ENCODE measurements at regions of chr3 and their contacts with region 1.

Region 1: DNA sequence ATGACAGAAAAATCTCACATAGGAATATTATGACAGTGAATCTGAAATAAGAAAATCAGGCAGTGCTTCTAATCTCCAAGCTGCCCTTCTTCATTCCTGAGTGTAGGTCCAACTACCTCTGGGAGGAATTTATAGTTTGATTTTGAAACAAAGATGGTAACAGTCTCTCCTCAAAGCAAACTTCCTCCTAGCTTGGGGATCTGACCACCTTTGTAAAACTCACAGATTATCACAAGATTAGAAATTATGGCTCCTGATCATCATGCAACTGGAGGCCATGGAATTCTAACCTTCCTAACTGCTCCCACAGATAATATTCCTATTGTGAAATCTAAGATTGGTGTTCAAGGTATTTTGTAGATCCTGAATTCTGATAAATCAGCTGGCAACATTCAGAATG is 7.4 kb downstream of the OR5H14 start:
- DNase-seq: no peak
- H3K4me3 ChIP-seq: no peak overlapping the region
- H3K27ac ChIP-seq: no peak overlapping the region
- H3K4me1 ChIP-seq: no peaks in the 10 kb centered on the region
- H3K27me3 ChIP-seq: no peaks in the 10 kb centered on the region
- CTCF ChIP-seq: no peak

Region 2: DNA sequence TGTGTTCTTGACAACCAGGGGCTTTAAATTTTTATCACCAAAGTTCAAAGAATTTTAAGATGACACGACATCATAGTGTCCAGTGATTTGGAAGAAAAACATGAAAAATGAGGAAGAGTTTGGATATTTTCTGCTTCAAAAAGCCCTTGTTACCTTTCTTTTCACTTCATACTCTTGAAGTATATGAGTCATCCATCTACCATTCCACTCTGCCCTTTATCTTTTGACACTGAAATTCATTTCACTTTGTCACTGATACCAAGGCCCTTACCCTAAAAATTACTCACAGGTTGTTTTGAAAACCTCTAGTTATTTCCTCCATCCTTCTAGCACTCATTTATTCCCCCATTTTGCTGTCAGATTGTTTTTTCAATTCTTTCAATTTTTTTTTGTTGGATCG is 54.6 kb after region 1 on chr3:
- intact Hi-C with region 1: loop called (anchors 2 kb)
- DNase-seq: no peak
- H3K4me3 ChIP-seq: no peak overlapping the region
- H3K27ac ChIP-seq: no peak overlapping the region
- H3K4me1 ChIP-seq: no peaks in the 10 kb centered on the region
- H3K27me3 ChIP-seq: no peaks in the 10 kb centered on the region
- CTCF ChIP-seq: no peak

Region 3: DNA sequence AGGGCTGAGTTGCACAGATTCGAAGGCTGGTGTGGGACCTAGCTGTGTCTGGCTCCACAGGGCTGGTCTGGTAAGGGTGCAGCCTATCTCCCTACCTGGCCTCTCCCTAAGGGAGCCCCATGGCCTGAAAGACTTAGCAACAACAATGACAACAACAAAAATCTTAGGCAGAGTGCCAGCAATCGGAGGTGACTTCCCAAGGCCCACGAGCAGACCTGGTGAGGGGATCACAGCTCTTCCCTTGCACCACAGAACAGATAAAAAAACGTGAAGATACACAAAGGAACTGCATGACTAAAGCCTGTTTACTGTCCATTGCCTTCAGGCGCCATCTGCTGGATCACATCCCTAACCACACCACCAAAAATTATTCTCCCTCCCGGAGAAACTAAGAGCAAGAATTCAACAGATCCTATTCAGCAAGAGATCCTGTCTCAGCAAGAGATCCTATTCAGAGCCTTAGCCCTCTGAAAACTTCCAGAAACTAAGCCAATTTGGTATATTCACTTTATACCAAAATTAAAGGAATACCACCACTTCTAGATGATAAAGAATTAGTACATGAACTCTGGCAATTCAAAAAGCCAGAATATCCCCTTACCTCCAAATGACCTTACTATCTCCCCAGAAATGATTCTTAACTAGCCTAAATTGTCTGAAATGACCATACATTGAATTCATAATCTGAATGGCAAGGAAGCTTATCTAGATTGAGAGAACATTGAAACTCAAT is 174.9 kb after region 1 on chr3:
- intact Hi-C with region 1: no loop called
- DNase-seq: peak; percentile 20
- H3K4me3 ChIP-seq: no peak overlapping the region
- H3K27ac ChIP-seq: no peak overlapping the region
- H3K4me1 ChIP-seq: no peaks in the 10 kb centered on the region
- H3K27me3 ChIP-seq: no peaks in the 10 kb centered on the region
- CTCF ChIP-seq: peak; percentile 23